Heart right ventricle (tissue), 16 donors: ENCODE measurements at regions of chr9 and their contacts with region 1.

Region 1: DNA sequence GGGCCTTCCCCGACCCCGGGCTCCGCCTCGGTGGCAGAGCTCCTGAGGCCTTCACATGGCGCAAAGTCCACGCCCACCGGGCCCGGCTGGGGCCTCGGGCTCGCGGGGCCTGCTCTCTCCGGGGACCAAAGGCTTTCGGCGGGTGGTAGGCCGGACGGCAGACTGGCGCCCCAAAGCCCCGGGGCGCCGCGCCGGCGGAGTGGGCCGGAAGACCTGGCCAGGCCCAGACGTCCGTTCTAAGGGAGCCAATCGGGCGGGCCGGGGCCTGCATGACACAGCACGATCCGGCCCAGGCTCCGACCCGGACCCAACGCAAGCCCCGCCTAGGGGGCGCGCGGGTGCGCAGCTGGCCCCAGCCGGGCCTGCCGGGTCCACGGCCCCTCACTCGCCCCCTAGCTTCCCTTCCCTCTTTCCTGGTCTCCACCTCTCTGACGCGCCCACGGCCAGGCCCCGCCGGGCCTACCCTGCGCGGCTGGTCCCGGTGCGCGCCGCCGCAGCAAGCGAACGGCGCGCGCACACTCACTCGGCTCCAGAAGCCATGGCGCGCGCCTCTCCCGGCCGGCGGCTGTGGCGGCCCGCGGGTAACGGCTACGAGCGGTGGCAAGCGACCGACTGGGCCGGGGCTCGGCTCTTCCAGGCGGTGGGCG is 488 bp downstream of the VCP start:
- DNase-seq: peak; percentile 86
- ATAC-seq: peak; percentile 66 to 88 (median 85)
- H3K4me3 ChIP-seq: peak overlapping the region; percentile 73 to 100 (median 92)
- H3K27ac ChIP-seq: peak overlapping the region; percentile 96 to 100 (median 100)
- H3K4me1 ChIP-seq: peaks cover 0 to 49% (median 39%) of the 10 kb centered on the region in 9 donors
- H3K27me3 ChIP-seq: no peaks in the 10 kb centered on the region
- CTCF ChIP-seq: peak in 8 of 9 donors; percentile 15 to 68 (median 48)

Region 2: GRCh38 chr9:34989003-34989945 is 82.7 kb before region 1 on chr9 and contains the start of gene DNAJB5:
- intact Hi-C with region 1: loop called in 4 of 10 experiments (anchors 5 to 10 kb)
- DNase-seq: peak; percentile 97 to 100
- ATAC-seq: peak; percentile 80 to 90 (median 84)
- H3K4me3 ChIP-seq: peak within 1 kb of the TSS; percentile 37 to 91 (median 77)
- H3K27ac ChIP-seq: peak within 1 kb of the TSS; percentile 72 to 99 (median 94)
- H3K4me1 ChIP-seq: peaks cover 19 to 62% (median 49%) of the 10 kb centered on the region in 9 donors
- H3K27me3 ChIP-seq: no peaks in the 10 kb centered on the region
- CTCF ChIP-seq: no peak
- total RNA-seq, gene DNAJB5: 49.0 to 206 (median 85.1) TPM

Region 3: DNA sequence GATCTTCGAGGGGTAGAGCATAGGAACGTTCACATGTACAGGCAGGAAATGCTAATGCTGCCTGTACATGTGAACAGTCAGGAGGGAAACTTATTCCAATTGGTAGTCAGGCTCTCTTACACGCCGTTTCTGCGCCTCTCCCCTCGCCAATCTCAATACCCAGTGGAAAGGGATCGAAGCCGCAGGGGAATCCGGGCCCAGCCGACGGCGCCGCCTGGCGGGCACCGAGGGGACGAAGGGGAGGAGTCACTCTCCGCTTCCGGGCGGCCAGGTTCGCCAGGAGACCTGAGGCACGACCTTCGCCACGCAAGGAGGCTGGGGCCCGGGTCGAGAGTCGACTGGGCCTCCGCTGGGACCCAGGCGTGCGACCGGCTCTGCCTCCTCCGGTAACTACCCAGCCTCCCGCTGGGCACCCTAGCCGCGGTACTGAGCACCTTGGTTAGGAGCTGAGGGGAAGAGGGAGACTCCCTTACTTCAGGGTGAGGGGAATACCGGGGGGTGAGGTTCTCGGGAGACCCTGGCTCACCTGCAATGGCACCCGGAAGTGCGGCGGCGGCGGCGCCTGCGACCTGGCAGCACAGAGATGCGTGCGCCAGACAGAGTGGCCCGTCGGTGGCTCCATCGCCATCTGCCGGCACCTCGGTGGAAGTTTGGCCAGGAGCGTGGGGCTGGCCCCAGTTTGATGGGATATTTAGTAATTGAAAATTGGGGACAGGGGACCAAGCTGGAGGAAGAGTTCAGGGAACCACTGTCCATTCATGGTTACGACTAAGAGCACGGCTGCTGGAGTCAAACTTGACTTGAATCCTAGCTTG is 24.3 kb after region 1 on chr9 and contains the start of gene PIGO:
- intact Hi-C with region 1: loop called in 1 of 10 experiments (anchors 2 kb)
- DNase-seq: peak; percentile 85 to 89
- ATAC-seq: peak; percentile 91 to 98 (median 96)
- H3K4me3 ChIP-seq: peak within 1 kb of the TSS; percentile 36 to 98 (median 84)
- H3K27ac ChIP-seq: peak within 1 kb of the TSS; percentile 70 to 99 (median 96)
- H3K4me1 ChIP-seq: peaks cover 0 to 18% (median 8%) of the 10 kb centered on the region in 9 donors
- H3K27me3 ChIP-seq: no peaks in the 10 kb centered on the region
- CTCF ChIP-seq: peak; percentile 63 to 81 (median 73)
- total RNA-seq, gene PIGO: 8.2 to 12.3 (median 9.9) TPM

Region 4: GRCh38 chr9:35111001-35111933 is 39.3 kb after region 1 on chr9:
- intact Hi-C with region 1: loop called in 1 of 10 experiments (anchors 5 kb)
- DNase-seq: peak; percentile 98
- ATAC-seq: peak; percentile 72 to 85 (median 82)
- H3K4me3 ChIP-seq: peak overlapping the region; percentile 49 to 89 (median 80)
- H3K27ac ChIP-seq: peak overlapping the region; percentile 56 to 98 (median 92)
- H3K4me1 ChIP-seq: peaks cover 17 to 61% (median 46%) of the 10 kb centered on the region in 9 donors
- H3K27me3 ChIP-seq: no peaks in the 10 kb centered on the region
- CTCF ChIP-seq: no peak